Right ventricle myocardium inferior (tissue), 1 donor: ENCODE measurements at regions of chr6 and their contacts with region 1.

Region 1: DNA sequence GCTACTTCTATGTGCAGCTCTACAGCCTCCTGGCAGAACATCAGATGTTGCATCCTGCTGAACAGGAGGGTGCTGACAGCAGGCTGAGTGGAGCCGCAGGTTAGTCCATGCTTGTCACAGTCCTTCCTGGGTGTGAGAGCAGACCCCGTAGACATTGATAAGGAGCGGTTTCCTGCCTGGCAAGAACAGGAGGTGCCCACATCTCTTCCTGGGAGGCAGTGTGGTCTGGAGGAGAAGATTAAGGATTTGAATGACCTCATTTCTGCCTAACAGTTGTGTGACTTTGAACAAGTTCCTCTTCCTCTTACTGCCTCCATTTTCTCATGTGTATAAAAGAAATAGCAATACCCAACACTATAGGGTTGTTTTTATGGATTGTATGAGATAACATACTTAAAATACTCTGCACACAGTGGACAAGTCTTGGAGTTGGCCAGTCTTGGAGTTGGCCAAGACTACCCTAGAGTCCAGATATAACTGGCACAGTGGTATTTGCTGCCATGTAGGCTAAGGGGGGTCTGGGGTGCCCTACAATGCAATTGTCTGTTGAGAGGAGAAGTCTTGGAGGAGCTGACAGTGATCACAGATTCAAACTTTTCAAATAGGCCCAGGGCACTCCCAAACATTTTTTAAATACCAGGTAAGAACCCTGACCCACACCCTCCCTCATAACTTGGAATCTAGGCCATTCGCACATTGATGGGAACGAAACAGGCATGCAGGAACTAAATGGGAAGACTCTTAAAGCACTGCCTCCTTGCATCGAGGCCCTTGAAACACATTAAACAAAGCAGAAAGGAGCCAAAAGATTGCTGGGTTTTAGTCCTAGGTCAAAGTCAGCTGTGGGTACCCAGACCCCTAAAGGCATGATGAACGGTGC is 32.6 kb upstream of the TBC1D7 start:
- DNase-seq: no peak
- ATAC-seq: peak; percentile 88

Region 2: GRCh38 chr6:13407709-13408695 is 47.1 kb after region 1 on chr6:
- intact Hi-C with region 1: loop called (anchors 5 kb)
- DNase-seq: peak; percentile 77
- ATAC-seq: peak; percentile 40